Endothelial cell of umbilical vein (primary cell): ENCODE measurements at regions of chr5 and their contacts with region 1.

Region 1: DNA sequence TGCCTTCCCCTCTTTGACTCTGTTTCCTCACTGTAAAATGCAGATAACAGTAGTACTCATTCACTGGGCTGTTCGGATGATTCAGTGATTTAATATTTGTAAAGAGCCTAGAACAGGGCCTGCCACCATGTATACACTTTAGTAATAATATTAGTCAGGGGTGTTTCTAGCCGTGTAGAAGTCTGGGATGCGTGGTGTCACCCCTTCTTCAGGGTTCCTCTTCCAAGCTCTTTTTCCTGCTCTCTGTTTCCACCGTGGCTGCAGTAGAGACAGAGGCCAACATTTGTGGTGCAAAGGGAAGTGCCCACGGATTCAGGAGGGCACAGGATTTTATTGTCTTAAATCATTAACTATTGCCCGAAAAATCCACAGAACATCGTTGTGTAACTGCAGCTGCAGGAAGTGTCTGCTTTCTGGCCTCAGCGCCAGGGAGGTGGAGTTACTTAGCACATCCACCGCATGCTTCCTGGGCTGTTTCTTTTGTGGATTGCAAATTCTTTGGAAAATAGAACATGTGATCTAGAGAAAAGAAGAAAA is 61.7 kb downstream of the TRIO start:
- DNase-seq: peak; percentile 93
- H3K4me3 ChIP-seq: peak overlapping the region in 1 of 3 experiments; percentile 14
- H3K27ac ChIP-seq: peak overlapping the region; percentile 87
- H3K4me1 ChIP-seq: peaks cover 82% of the 10 kb centered on the region
- H3K27me3 ChIP-seq: no peaks in the 10 kb centered on the region
- CTCF ChIP-seq: no peak
- POLR2A ChIP-seq: no peak

Region 2: DNA sequence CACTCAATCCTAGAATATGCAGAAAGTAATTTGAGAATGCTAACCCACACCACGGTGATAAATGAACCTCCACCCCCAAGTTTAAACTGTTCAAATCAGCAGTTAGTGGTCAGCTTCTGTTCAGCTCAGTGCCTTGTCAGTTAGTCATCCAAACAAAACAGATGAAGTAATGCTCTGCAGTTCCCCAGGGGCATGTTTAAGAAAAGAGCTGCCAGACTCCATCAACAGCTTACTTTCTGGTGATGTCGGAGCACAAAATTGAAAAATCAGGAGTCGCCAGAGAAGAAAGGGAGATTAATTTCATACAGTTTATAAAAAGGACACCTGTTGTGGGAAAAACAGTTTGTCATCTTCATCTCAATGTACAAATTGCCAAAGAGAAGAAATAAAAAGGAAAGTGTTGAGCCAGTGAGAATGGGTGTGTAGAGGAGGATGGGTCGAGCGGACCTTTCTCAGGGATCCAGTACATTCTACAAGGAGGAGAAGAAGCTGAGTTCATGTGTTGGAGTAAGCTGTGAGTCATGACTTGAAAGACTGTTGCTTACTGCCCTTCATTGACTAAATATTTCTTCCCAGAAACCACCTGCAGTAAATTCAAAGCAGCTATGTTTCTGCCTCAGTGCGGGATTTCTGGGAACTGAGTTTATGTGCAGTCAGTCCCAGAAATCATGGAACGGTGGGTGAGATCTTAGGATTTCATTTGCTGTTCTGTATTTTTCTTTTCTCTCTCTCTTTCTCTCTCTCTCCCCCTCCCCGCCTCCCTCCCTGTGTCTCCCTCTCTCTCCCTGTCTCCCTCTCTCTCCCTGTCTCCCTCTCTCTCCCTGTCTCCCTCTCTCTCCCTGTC is 48.0 kb before region 1 on chr5:
- CTCF ChIA-PET with region 1: interaction called, 6 read pairs
- POLR2A ChIA-PET with region 1: interaction called, 5 read pairs
- dilution Hi-C with region 1: no loop called
- intact Hi-C with region 1: loop called (anchors 2 kb)
- DNase-seq: peak; percentile 91
- H3K4me3 ChIP-seq: peak overlapping the region in 1 of 3 experiments; percentile 49
- H3K27ac ChIP-seq: peak overlapping the region; percentile 97
- H3K4me1 ChIP-seq: peaks cover 55% of the 10 kb centered on the region
- H3K27me3 ChIP-seq: no peaks in the 10 kb centered on the region
- CTCF ChIP-seq: no peak
- POLR2A ChIP-seq: no peak

Region 3: DNA sequence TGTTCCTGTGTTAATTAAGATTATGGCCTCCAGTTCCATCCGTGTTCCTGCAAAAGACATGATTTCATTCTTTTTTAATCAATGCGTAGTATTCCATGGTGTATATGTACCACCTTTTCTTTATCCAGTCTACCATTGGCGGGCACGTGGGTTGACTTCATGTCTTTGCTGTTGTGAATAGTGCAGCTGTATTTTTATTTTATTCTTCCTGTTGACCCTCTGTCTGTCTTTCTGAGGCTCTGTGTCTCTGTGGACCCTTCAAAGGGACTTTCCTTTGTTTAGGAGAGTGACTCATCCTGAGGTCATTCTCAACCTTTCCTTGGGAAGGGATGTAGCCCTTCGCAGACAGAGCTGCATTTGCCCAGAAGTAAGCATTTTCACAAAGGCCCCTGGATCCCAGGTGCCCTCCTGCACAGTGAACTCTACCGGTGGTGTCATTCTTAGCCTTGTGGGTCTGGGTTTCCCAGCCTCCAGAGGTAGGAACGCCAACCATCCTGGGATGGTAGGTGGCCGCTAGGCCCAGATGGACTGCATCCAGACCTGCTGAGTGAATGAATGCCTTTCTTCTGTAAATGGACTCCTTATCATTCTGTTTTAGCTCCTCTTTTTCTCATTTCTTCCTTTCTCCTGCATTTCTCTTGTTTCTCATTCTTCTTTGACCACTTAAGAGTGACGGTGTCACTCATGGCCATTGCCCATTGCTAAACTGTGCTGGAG is 39.3 kb before region 1 on chr5:
- CTCF ChIA-PET with region 1: interaction called, 5 read pairs
- POLR2A ChIA-PET with region 1: no interaction called
- dilution Hi-C with region 1: no loop called
- intact Hi-C with region 1: loop called (anchors 2 kb)
- DNase-seq: peak; percentile 98
- H3K4me3 ChIP-seq: no peak overlapping the region
- H3K27ac ChIP-seq: peak overlapping the region; percentile 88
- H3K4me1 ChIP-seq: peaks cover 44% of the 10 kb centered on the region
- H3K27me3 ChIP-seq: no peaks in the 10 kb centered on the region
- CTCF ChIP-seq: no peak
- POLR2A ChIP-seq: peak; percentile 27

Region 4: DNA sequence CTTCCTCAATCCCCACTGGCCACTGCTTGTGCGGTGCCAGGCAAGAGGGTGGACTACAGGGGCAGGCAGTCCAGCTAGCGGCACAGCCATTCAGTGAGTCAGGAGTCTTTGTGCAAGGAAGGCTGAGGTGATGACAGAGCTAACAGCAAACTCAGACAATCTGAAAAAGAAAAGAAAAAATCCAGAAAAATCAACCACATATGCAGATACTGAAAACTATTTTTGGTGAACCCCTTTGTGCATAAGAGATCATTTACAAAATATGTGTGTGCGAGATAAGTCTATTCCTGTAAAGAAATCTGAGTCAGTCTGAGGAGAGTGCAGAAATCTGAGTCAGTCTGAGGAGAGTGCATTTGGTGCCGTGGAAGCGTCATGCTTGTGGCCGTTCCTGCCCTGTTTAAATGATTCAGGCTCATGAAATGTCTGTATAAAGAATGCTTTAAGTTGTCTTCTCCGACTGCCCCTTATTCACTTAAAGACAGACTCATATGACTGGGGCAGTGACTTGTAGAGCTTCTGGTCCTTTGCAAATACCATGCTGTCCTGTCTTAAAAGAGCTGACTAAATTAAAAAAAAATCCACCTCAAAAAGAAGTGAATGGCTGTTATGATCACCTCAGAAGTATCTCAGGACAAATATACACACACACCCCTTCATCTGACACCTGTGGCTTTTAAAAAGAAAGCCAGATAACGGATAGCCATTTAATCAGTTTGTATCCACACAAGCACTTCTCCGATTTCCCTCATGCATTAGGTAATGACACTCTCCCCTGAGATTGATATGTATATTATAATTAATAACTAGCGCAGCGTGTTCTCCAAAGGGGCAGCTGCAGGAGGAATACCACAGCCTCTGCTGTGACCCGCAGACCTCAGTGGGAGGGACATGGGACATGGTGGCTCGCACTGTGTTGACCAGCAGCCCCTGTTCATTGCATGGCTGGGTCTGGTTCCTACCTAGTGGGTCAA is 14.4 kb before region 1 on chr5:
- CTCF ChIA-PET with region 1: interaction called, 11 read pairs
- POLR2A ChIA-PET with region 1: interaction called, 4 read pairs
- dilution Hi-C with region 1: no loop called
- intact Hi-C with region 1: loop called (anchors 1 kb)
- DNase-seq: peak; percentile 93
- H3K4me3 ChIP-seq: no peak overlapping the region
- H3K27ac ChIP-seq: peak overlapping the region; percentile 74
- H3K4me1 ChIP-seq: peaks cover 86% of the 10 kb centered on the region
- H3K27me3 ChIP-seq: no peaks in the 10 kb centered on the region
- CTCF ChIP-seq: no peak
- POLR2A ChIP-seq: no peak

Region 5: DNA sequence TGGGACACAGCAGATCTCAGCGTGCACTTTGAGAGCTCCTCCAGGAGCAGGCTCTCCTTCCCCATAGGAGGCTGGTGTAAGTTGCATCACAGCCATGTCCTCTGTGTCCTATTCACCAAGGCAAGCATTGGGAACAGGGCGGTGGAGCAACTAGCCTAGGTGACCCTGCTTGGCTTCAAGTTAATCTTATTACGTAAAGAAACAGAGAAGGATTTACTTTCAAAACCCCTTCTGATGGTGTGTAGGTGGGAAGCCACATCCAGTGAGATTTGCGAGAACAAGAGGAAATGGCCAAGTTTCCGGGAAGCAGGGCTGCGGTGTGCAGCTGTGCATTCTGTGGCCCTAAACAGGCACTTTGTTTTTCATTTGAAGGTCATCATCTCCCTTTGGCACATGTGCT is 18.5 kb after region 1 on chr5:
- CTCF ChIA-PET with region 1: interaction called, 5 read pairs
- POLR2A ChIA-PET with region 1: no interaction called
- dilution Hi-C with region 1: no loop called
- intact Hi-C with region 1: loop called (anchors 1 kb)
- DNase-seq: peak; percentile 68
- H3K4me3 ChIP-seq: no peak overlapping the region
- H3K27ac ChIP-seq: peak overlapping the region; percentile 36
- H3K4me1 ChIP-seq: peaks cover 55% of the 10 kb centered on the region
- H3K27me3 ChIP-seq: no peaks in the 10 kb centered on the region
- CTCF ChIP-seq: no peak
- POLR2A ChIP-seq: peak; percentile 53

Region 6: GRCh38 chr5:14364576-14365472 is 160.0 kb after region 1 on chr5:
- CTCF ChIA-PET with region 1: no interaction called
- POLR2A ChIA-PET with region 1: no interaction called
- dilution Hi-C with region 1: no loop called
- intact Hi-C with region 1: no loop called
- DNase-seq: peak; percentile 9
- H3K4me3 ChIP-seq: no peak overlapping the region
- H3K27ac ChIP-seq: no peak overlapping the region
- H3K4me1 ChIP-seq: no peaks in the 10 kb centered on the region
- H3K27me3 ChIP-seq: no peaks in the 10 kb centered on the region
- CTCF ChIP-seq: peak; percentile 29 to 65
- POLR2A ChIP-seq: no peak

Region 7: GRCh38 chr5:15003511-15003920 is 798.7 kb after region 1 on chr5:
- CTCF ChIA-PET with region 1: no interaction called
- POLR2A ChIA-PET with region 1: no interaction called
- dilution Hi-C with region 1: no loop called
- intact Hi-C with region 1: no loop called
- DNase-seq: peak; percentile 82
- H3K4me3 ChIP-seq: no peak overlapping the region
- H3K27ac ChIP-seq: no peak overlapping the region
- H3K4me1 ChIP-seq: peaks cover 8% of the 10 kb centered on the region
- H3K27me3 ChIP-seq: peaks cover 21 to 39% of the 10 kb centered on the region in 2 experiments
- CTCF ChIP-seq: peak; percentile 70 to 81
- POLR2A ChIP-seq: no peak